Endothelial cell of umbilical vein (primary cell): ENCODE measurements at regions of chr3 and their contacts with region 1.

Region 1: DNA sequence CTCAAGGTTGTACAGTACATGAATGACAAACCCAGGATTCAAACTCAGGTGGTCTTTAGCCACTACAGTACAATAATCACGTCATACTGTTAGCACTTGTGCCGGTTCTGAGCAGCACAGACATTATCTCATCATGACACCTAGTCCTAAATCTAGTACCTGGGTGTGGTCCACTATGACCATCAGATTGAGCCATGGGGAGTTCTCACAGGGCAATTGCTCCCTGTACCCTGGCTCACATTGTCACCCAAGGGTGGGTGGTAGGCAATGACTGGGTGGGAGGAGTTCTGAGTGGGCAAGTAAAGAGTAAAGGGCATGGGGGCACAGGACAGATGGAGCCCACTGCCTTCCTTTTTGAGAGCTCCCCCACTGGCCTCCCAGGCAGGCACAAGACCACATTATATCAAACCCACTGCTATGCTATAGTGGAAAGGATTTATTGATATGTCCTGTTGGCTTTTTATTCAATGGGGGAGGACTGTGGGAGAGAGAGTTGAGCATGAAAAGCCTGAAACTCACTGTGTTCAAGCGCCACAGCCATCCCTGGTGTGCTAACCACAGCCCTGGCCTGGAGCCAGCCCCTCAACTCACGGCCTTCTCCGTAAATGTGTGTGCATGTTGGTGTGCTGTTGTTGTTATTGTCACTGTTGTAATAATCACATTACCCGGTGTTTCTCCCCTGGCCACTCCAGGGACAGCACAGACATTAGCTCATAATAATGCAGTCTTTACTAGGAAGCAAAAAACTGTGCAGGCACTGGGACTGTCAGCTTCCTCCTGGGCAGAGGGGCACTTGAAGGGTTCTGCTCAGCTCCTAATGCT is 27.3 kb downstream of the ADCY5 start:
- DNase-seq: no peak
- H3K4me3 ChIP-seq: no peak overlapping the region
- H3K27ac ChIP-seq: no peak overlapping the region
- H3K4me1 ChIP-seq: no peaks in the 10 kb centered on the region
- H3K27me3 ChIP-seq: peaks cover 0 to 4% of the 10 kb centered on the region in 2 experiments
- CTCF ChIP-seq: no peak
- POLR2A ChIP-seq: no peak

Region 2: DNA sequence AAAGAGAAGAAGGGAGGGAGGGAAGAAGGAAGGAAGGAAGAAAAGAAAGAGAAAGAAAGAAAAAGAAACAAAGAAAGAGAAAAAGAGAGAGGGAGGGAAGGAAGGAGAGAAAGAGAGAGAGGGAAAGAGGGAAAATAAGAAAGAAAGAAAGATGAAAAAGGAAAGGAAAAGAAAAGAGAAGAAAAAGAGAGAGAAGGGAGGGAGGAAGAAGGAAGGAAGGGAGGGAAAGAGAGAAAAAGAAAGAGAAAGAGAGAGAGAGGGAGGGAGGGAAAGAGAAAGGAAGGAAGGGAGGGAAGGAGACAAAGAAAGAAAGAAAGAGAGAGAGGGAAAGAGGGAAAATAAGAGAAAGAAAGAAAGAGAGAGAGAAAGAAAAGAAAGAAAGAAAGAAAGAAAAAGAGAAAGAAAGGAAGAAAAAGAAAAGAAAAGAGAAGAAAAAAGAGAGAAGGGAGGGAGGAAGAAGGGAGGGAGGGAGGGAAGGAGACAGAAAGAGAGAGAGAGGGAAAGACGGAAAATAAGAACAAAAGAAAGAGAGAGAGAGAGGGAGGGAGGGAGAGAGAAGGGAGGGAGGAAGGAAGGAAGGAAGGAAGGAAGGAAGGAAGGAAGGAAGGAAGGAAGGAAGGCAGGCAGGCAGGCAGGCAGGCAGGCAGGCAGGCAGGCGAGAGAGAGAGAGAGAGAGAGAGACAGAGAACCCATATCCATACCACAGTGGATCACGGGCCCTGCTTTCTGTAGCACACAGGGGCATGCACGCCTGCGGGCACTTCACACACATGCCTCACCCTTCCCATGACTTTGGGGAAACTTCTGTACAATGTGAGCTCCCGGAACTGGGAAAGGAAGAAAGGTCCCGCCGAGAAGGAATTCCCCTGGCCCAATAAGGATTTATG is 25.2 kb before region 1 on chr3:
- CTCF ChIA-PET with region 1: no interaction called
- POLR2A ChIA-PET with region 1: no interaction called
- dilution Hi-C with region 1: no loop called
- intact Hi-C with region 1: no loop called
- DNase-seq: no peak
- H3K4me3 ChIP-seq: no peak overlapping the region
- H3K27ac ChIP-seq: no peak overlapping the region
- H3K4me1 ChIP-seq: no peaks in the 10 kb centered on the region
- H3K27me3 ChIP-seq: peaks cover 16 to 18% of the 10 kb centered on the region in 2 experiments
- CTCF ChIP-seq: no peak
- POLR2A ChIP-seq: no peak

Region 3: DNA sequence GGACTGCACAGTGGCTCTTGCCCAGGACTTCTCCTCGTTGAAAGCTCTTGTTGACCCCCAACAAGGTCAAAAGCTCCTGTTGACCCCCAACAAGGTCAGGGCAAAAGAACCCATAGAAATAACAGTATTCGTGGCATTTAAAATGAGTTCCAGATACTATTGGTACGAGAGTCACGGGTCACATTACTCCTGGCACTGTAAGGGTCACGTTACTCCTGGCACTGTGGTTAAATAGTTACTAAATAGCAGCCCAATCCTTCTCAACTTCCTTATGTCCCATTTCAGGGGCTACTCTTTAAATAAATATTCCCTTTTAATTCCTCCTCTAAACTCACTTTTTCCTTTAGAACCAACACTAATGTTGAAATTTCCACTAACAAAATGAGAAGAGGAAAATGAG is 45.5 kb after region 1 on chr3:
- CTCF ChIA-PET with region 1: no interaction called
- POLR2A ChIA-PET with region 1: no interaction called
- dilution Hi-C with region 1: no loop called
- intact Hi-C with region 1: loop called (anchors 1 kb)
- DNase-seq: no peak
- H3K4me3 ChIP-seq: no peak overlapping the region
- H3K27ac ChIP-seq: no peak overlapping the region
- H3K4me1 ChIP-seq: no peaks in the 10 kb centered on the region
- H3K27me3 ChIP-seq: peaks cover 10 to 15% of the 10 kb centered on the region in 2 experiments
- CTCF ChIP-seq: no peak
- POLR2A ChIP-seq: no peak